ENCODE measurements at regions of chr10 and their contacts with region 1.

Region 1: GRCh38 chr10:104268716-104269645 is at the start of gene GSTO2:
- DNase-seq: peak; percentile 99
- H3K4me3 Mint-ChIP-seq: peak within 1 kb of the TSS; percentile 84
- H3K27ac Mint-ChIP-seq: peak within 1 kb of the TSS; percentile 99
- H3K4me1 Mint-ChIP-seq: peaks cover 40% of the 10 kb centered on the region
- H3K27me3 Mint-ChIP-seq: no peaks in the 10 kb centered on the region
- total RNA-seq, gene GSTO2: 3.0 to 3.6 TPM

Region 2: GRCh38 chr10:103564776-103565520 is 704.0 kb before region 1 on chr10:
- CTCF ChIA-PET with region 1: no interaction called
- intact Hi-C with region 1: no loop called
- DNase-seq: peak; percentile 74
- H3K4me3 Mint-ChIP-seq: no peak overlapping the region
- H3K27ac Mint-ChIP-seq: no peak overlapping the region
- H3K4me1 Mint-ChIP-seq: no peaks in the 10 kb centered on the region
- H3K27me3 Mint-ChIP-seq: peaks cover 2% of the 10 kb centered on the region

Region 3: GRCh38 chr10:103918053-103918846 is 350.7 kb before region 1 on chr10 and contains the start of gene STN1:
- CTCF ChIA-PET with region 1: no interaction called
- intact Hi-C with region 1: loop called (anchors 1 kb)
- DNase-seq: peak; percentile 98
- H3K4me3 Mint-ChIP-seq: peak within 1 kb of the TSS; percentile 89
- H3K27ac Mint-ChIP-seq: peak within 1 kb of the TSS; percentile 94
- H3K4me1 Mint-ChIP-seq: peaks cover 29% of the 10 kb centered on the region
- H3K27me3 Mint-ChIP-seq: no peaks in the 10 kb centered on the region
- total RNA-seq, gene STN1: 53.3 to 54.8 TPM

Region 4: GRCh38 chr10:103983367-103983911 is 285.5 kb before region 1 on chr10:
- CTCF ChIA-PET with region 1: no interaction called
- intact Hi-C with region 1: loop called (anchors 5 kb)
- DNase-seq: peak; percentile 26
- H3K4me3 Mint-ChIP-seq: peak overlapping the region; percentile 7
- H3K27ac Mint-ChIP-seq: peak overlapping the region; percentile 72
- H3K4me1 Mint-ChIP-seq: peaks cover 59% of the 10 kb centered on the region
- H3K27me3 Mint-ChIP-seq: no peaks in the 10 kb centered on the region

Region 5: GRCh38 chr10:104130041-104130440 is 138.9 kb before region 1 on chr10:
- CTCF ChIA-PET with region 1: no interaction called
- intact Hi-C with region 1: no loop called
- DNase-seq: no peak
- H3K4me3 Mint-ChIP-seq: no peak overlapping the region
- H3K27ac Mint-ChIP-seq: no peak overlapping the region
- H3K4me1 Mint-ChIP-seq: peaks cover 11% of the 10 kb centered on the region
- H3K27me3 Mint-ChIP-seq: peaks cover 5% of the 10 kb centered on the region

Region 6: DNA sequence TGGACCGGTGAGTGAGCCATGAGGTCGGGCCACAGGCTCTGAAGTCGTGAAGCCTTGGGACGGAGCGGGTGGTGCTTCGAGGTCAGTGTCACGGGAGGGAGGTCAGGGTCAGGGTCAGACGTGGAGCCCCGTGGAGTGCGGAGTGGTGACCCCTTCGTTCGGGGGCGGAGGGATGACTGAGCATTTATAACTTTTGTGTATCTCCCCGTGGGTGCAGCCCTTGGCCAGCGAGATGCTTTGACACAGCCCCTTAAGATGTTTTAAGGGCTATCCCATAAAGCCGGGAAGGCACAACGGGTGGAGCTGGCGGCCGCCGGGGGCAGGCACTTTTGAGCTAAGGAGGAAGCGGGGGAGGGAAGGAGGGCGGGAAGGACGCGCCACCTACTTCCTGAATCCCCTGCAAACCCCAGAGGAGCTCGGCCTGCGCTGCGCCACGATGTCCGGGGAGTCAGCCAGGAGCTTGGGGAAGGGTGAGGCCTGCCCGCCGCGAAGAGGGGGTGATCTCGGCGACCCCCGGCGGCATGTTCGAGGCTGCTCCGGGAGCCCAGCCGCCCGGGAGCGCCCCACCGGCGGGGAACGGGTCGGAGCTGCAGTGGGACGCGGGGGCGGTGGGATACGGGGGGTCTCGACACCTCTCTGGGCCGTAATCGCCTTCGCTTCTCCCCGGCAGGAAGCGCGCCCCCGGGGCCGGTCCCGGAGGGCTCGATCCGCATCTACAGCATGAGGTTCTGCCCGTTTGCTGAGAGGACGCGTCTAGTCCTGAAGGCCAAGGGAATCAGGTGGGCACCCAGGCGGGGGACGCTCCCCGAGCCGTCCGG is 14.3 kb before region 1 on chr10 and contains the start of gene GSTO1:
- CTCF ChIA-PET with region 1: interaction called, 39 read pairs
- intact Hi-C with region 1: loop called (anchors 1 kb)
- DNase-seq: peak; percentile 72
- H3K4me3 Mint-ChIP-seq: peak within 1 kb of the TSS; percentile 99
- H3K27ac Mint-ChIP-seq: peak within 1 kb of the TSS; percentile 99
- H3K4me1 Mint-ChIP-seq: peaks cover 52% of the 10 kb centered on the region
- H3K27me3 Mint-ChIP-seq: peaks cover 4% of the 10 kb centered on the region
- total RNA-seq, gene GSTO1: 197 to 201 TPM

Region 7: GRCh38 chr10:104300736-104301292 is 31.8 kb after region 1 on chr10:
- CTCF ChIA-PET with region 1: interaction called, 195 read pairs
- intact Hi-C with region 1: loop called (anchors 1 kb)
- DNase-seq: peak; percentile 67
- H3K4me3 Mint-ChIP-seq: peak overlapping the region; percentile 64
- H3K27ac Mint-ChIP-seq: peak overlapping the region; percentile 78
- H3K4me1 Mint-ChIP-seq: peaks cover 36% of the 10 kb centered on the region
- H3K27me3 Mint-ChIP-seq: peaks cover under 1% of the 10 kb centered on the region

Region 8: DNA sequence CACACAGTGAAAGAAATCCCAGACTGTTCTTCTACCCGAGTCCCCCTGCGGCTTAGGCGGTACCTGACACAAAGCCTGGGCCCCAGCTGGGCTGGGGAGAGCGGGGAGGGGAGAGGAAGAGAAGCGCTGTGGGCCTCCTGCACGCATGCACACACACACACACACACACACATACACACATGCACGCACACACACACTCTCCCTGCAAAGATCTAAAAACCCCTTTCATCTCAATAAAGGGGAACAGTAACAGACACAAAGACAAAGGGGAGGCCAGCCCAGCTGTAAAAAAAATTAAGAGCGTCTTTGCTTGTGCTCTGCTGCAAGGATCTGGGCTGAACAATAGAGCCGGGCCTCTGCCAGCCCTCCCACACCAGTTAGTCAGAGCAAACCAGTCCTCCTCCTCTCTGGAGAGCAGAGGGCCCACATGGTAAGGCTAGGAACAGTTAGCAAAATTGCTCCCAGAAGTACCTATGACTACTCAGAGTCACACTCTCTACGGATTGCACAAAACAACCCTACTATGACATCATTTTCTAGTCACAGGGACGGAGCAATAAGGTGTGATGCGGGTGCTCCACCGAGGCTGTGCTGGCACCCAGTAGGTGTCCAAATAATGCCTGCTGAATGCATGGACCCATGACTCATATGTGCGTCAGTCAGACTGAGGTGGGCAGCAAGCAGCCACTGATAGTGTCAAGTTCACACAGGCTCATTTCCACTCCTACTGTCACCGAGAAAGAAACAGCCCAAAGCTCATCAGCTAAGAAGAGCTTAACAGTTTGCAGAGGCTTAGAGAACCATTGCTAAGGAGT is 60.1 kb after region 1 on chr10:
- CTCF ChIA-PET with region 1: interaction called, 5 read pairs
- intact Hi-C with region 1: loop called (anchors 1 kb)
- DNase-seq: peak; percentile 94
- H3K4me3 Mint-ChIP-seq: peak overlapping the region; percentile 72
- H3K27ac Mint-ChIP-seq: peak overlapping the region; percentile 96
- H3K4me1 Mint-ChIP-seq: peaks cover 98% of the 10 kb centered on the region
- H3K27me3 Mint-ChIP-seq: no peaks in the 10 kb centered on the region

Region 9: DNA sequence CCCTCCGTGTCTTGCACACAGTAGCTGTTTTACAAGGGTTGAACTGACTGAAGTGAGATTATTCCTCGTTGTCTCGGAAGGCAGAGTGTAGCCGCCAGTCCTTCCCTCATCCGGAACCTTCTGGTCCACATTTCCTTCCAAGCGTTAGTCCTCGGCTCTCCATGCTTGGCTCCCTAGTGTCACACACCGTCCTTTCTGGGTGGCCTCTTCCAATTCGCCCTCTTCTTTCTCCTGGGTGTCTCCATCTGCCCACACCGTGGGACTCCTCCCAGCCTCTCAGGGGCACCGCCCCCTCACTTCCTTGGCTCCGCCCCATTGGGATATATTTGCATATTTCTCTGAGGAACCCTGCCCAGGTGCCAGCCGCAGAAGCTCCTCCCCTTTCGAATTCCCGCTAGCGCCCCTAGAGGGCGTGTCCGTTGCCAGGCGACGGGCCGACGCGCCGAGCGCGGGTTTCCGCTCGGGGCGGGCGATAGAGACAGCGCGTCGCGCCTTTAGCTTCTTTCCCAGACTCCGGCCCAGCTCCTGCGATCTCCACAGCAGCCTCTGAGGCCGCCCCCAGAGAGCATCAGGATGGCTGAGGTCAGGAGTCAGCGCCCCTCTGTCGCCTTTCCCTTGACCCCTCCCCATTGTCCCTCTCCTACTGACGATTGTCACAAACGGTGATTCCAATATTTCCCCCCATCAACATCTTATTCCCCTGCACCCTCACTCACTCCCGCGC is 84.5 kb after region 1 on chr10 and contains the start of gene CFAP58:
- CTCF ChIA-PET with region 1: interaction called, 84 read pairs
- intact Hi-C with region 1: loop called (anchors 1 kb)
- DNase-seq: peak; percentile 94
- H3K4me3 Mint-ChIP-seq: peak within 1 kb of the TSS; percentile 5
- H3K27ac Mint-ChIP-seq: peak within 1 kb of the TSS; percentile 8
- H3K4me1 Mint-ChIP-seq: no peaks in the 10 kb centered on the region
- H3K27me3 Mint-ChIP-seq: no peaks in the 10 kb centered on the region
- total RNA-seq, gene CFAP58: 0.59 to 0.86 TPM

Measured in activated naive CD4-positive, alpha-beta T cell treated with anti-CD3 and anti-CD28 coated beads for 36 hours (primary cell).